ENCODE measurements at regions of chr10 and their contacts with region 1.

Region 1: GRCh38 chr10:90751107-90751997 is 106.5 kb downstream of the HTR7 start:
- DNase-seq: peak; percentile 32
- H3K4me3 ChIP-seq: no peak overlapping the region
- H3K27ac ChIP-seq: no peak overlapping the region
- H3K4me1 ChIP-seq: no peaks in the 10 kb centered on the region
- H3K27me3 ChIP-seq: no peaks in the 10 kb centered on the region
- CTCF ChIP-seq: peak; percentile 56

Region 2: GRCh38 chr10:90862908-90863514 is 111.7 kb after region 1 on chr10:
- intact Hi-C with region 1: loop called (anchors 5 kb)
- DNase-seq: no peak
- H3K4me3 ChIP-seq: no peak overlapping the region
- H3K27ac ChIP-seq: no peak overlapping the region
- H3K4me1 ChIP-seq: no peaks in the 10 kb centered on the region
- H3K27me3 ChIP-seq: peaks cover 8% of the 10 kb centered on the region
- CTCF ChIP-seq: peak; percentile 62

Region 3: GRCh38 chr10:91159254-91159783 is 408.0 kb after region 1 on chr10:
- intact Hi-C with region 1: no loop called
- DNase-seq: no peak
- H3K4me3 ChIP-seq: no peak overlapping the region
- H3K27ac ChIP-seq: no peak overlapping the region
- H3K4me1 ChIP-seq: no peaks in the 10 kb centered on the region
- H3K27me3 ChIP-seq: no peaks in the 10 kb centered on the region
- CTCF ChIP-seq: no peak

Measured in colonic mucosa (tissue), 4 donors.